ENCODE measurements at regions of chr1 and their contacts with region 1.

Region 1: GRCh38 chr1:157156058-157156541 is 17.9 kb upstream of the ETV3 start:
- DNase-seq: peak; percentile 69 to 75 (median 70)
- H3K4me3 ChIP-seq: peak overlapping the region in 3 of 7 experiments; percentile 2 to 26 (median 17)
- H3K27ac ChIP-seq: no peak overlapping the region
- H3K4me1 ChIP-seq: peaks cover 0 to 38% (median 27%) of the 10 kb centered on the region in 4 experiments
- H3K27me3 ChIP-seq: no peaks in the 10 kb centered on the region

Region 2: GRCh38 chr1:157104598-157105293 is 51.4 kb before region 1 on chr1:
- CTCF ChIA-PET with region 1: interaction called, 20 read pairs
- POLR2A ChIA-PET with region 1: interaction called, 3 read pairs
- DNase-seq: no peak
- H3K4me3 ChIP-seq: no peak overlapping the region
- H3K27ac ChIP-seq: no peak overlapping the region
- H3K4me1 ChIP-seq: peaks cover 0 to 11% (median 1%) of the 10 kb centered on the region in 4 experiments
- H3K27me3 ChIP-seq: peaks cover 0 to 25% (median 4%) of the 10 kb centered on the region in 5 experiments

Region 3: GRCh38 chr1:157138220-157139051 is 17.7 kb before region 1 on chr1 and contains the start of gene ETV3:
- CTCF ChIA-PET with region 1: interaction called, 180 read pairs
- POLR2A ChIA-PET with region 1: interaction called, 31 read pairs
- DNase-seq: peak; percentile 87 to 93 (median 90)
- H3K4me3 ChIP-seq: peak within 1 kb of the TSS; percentile 80 to 97 (median 94)
- H3K27ac ChIP-seq: peak within 1 kb of the TSS; percentile 91 to 96
- H3K4me1 ChIP-seq: peaks cover 21 to 40% (median 27%) of the 10 kb centered on the region in 4 experiments
- H3K27me3 ChIP-seq: no peaks in the 10 kb centered on the region

Region 4: GRCh38 chr1:157166590-157166989 is 10.5 kb after region 1 on chr1:
- CTCF ChIA-PET with region 1: interaction called, 17 read pairs
- POLR2A ChIA-PET with region 1: no interaction called
- DNase-seq: no peak
- H3K4me3 ChIP-seq: no peak overlapping the region
- H3K27ac ChIP-seq: no peak overlapping the region
- H3K4me1 ChIP-seq: peaks cover 0 to 6% (median 0%) of the 10 kb centered on the region in 4 experiments
- H3K27me3 ChIP-seq: peaks cover 0 to 4% (median 0%) of the 10 kb centered on the region in 5 experiments